Ascending aorta (tissue), 2 donors: ENCODE measurements at regions of chr10 and their contacts with region 1.

Region 1: GRCh38 chr10:11017570-11018431 is at the start of gene CELF2:
- DNase-seq: peak in 1 of 2 donors; percentile 79
- H3K4me3 ChIP-seq: peak within 1 kb of the TSS; percentile 77 to 78
- H3K27ac ChIP-seq: peak within 1 kb of the TSS; percentile 83 to 87
- H3K4me1 ChIP-seq: peaks cover 0 to 7% of the 10 kb centered on the region in 2 donors
- H3K27me3 ChIP-seq: no peaks in the 10 kb centered on the region
- CTCF ChIP-seq: no peak
- total RNA-seq, gene CELF2: 26.6 TPM

Region 2: GRCh38 chr10:10499839-10500238 is 518.0 kb before region 1 on chr10:
- intact Hi-C with region 1: no loop called
- DNase-seq: no peak
- H3K4me3 ChIP-seq: no peak overlapping the region
- H3K27ac ChIP-seq: no peak overlapping the region
- H3K4me1 ChIP-seq: no peaks in the 10 kb centered on the region
- H3K27me3 ChIP-seq: no peaks in the 10 kb centered on the region
- CTCF ChIP-seq: no peak

Region 3: DNA sequence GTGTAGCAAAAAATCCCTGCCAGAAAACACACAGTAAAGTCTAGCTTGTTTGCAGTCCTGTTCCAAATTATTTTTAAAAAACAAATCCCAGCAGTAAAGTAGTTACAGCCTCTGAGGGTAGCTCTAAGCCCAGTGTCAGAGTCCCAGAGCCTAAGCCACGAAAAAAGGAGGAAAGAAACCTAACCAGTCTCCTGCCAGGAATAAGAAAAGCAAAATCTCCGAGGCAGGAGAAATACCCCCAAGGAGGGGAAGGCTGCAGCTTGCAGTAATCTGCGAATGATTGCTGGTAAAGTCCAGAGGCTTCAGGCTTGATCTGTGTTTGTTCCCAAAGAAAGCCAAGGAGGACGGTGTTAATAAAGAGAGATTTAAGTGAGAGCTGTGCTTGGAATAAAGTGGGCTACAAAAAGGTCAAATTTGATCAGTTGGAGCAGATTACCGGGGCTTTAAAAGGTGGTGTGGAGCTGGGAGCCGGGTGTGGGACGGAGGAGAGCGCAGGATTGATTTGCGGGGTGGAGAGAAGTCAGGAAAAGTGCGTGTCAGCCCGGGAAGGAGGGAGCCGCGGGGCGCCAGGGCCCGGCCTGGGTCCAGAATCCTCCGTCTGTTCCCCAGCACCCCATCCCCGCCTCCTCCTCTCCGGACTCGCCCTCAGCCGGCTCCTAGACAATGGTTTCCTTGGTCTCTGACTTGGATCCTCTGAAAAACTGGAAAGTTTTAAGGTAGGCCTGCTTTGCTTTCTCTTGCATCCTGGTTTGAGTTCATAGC is 219.5 kb before region 1 on chr10:
- intact Hi-C with region 1: loop called (anchors 2 kb)
- DNase-seq: no peak
- H3K4me3 ChIP-seq: peak overlapping the region; percentile 25 to 59
- H3K27ac ChIP-seq: peak overlapping the region; percentile 90 to 93
- H3K4me1 ChIP-seq: peaks cover 5 to 28% of the 10 kb centered on the region in 2 donors
- H3K27me3 ChIP-seq: no peaks in the 10 kb centered on the region
- CTCF ChIP-seq: peak in 1 of 3 experiments; percentile 4

Region 4: GRCh38 chr10:10872035-10872673 is 145.6 kb before region 1 on chr10:
- intact Hi-C with region 1: loop called (anchors 2 kb)
- DNase-seq: peak in 1 of 2 donors; percentile 84
- H3K4me3 ChIP-seq: peak overlapping the region in 1 of 2 donors; percentile 7
- H3K27ac ChIP-seq: peak overlapping the region; percentile 83 to 88
- H3K4me1 ChIP-seq: peaks cover 0 to 33% of the 10 kb centered on the region in 2 donors
- H3K27me3 ChIP-seq: no peaks in the 10 kb centered on the region
- CTCF ChIP-seq: no peak

Region 5: DNA sequence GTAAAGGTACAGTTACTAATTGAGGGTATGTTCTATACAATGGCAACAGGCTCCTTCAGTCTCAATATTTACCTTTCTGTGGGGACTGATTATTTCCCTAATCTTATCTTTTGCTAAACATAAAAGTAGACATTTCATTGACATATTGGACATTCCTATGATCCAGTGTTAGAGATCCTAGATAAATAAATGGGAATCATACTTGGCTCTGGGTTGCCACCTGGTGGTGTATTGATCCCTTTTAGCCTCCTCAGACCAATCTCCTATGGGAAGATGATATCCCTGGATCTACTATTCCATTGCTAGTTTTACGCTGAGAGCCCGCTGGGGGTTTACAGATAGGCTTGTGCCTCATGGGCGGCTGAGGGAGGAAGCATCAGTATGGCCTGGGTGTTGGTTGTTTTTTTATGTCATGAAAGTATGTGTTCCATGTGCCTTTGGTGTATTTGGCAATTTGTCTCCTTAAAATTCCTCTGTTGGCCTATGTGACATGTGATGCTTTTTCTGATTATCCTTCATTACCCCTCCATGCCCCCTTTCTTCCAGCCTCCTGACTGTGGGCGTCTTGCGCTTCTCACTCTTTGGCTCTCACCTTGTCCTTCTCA is 18.7 kb after region 1 on chr10:
- intact Hi-C with region 1: loop called (anchors 2 kb)
- DNase-seq: no peak
- H3K4me3 ChIP-seq: no peak overlapping the region
- H3K27ac ChIP-seq: no peak overlapping the region
- H3K4me1 ChIP-seq: peaks cover 0 to 7% of the 10 kb centered on the region in 2 donors
- H3K27me3 ChIP-seq: no peaks in the 10 kb centered on the region
- CTCF ChIP-seq: peak; percentile 14 to 57 (median 53)